Mammary epithelial cell (primary cell): ENCODE measurements at regions of chr10 and their contacts with region 1.

Region 1: GRCh38 chr10:5565671-5566577 is 41.2 kb downstream of the CALML3 start:
- DNase-seq: peak; percentile 100
- H3K4me3 ChIP-seq: no peak overlapping the region
- H3K27ac ChIP-seq: peak overlapping the region; percentile 100
- H3K4me1 ChIP-seq: peaks cover 44% of the 10 kb centered on the region
- H3K27me3 ChIP-seq: no peaks in the 10 kb centered on the region
- CTCF ChIP-seq: no peak

Region 2: DNA sequence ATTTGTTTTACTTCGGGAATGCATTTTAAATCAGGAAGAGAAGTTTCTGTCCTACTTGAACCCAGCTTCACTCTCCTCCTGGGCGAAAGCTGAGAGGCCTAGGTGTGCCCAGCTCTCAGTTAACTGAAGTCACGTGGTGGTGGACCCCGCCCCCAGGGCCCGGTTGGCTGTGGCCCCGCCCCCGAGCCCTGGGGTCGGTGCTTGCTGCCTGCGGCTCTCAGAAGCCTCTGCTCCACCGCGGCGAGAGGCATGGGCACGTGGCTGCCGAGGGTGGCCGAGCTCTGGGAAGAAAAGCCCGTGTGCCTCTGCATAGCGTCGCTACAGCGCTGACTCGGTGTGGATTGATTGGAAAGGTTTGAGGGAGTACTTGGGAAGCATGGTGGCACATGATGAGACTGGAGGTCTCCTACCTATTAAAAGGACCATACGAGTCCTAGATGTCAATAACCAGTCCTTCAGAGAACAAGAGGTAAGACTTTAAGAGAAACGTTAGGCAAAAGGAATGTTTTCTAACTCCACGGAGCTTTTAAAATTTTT is 119.5 kb before region 1 on chr10:
- CTCF ChIA-PET with region 1: interaction called, 3 read pairs
- dilution Hi-C with region 1: no loop called
- in situ Hi-C with region 1: no loop called
- intact Hi-C with region 1: loop called (anchors 5 kb)
- DNase-seq: peak; percentile 95
- H3K4me3 ChIP-seq: no peak overlapping the region
- H3K27ac ChIP-seq: no peak overlapping the region
- H3K4me1 ChIP-seq: peaks cover 27% of the 10 kb centered on the region
- H3K27me3 ChIP-seq: no peaks in the 10 kb centered on the region
- CTCF ChIP-seq: no peak

Region 3: DNA sequence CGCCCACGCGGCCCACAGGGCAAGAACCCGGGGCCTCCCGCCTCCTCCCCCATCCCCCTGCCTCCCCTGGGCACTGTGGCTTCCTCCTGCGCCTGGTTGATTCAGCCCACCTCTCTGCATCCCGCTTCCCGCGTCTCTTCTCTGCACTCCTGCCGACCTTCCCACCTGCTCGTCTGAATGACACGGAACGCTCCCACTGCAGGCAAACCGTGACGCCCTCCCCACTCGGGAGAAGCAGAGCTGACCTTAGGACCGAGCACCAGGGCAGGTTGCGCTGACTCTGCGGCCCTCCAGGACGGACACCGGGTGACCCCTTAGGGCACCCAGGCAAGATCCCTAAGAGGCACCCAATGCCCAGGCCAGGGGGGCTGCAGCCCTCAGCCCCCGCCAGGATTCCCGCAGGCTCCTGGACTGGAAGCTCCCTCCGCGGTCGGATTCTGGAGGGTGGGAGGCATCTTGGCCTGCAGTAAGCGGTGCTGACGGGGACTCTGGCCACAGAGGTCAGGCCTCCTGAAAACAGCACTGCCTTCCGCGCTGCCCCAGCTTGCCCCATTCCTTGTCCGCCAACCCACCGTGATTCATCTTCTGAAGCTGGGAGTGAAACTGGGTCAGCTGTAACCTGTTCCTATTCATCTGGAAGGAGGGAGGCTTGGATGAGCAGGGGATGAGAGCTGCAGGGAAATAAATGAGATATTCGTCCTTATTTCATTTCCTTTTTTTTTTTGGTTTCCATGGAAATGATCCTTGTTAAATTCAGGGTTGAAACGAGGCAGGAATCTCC is 40.2 kb before region 1 on chr10:
- CTCF ChIA-PET with region 1: no interaction called
- dilution Hi-C with region 1: no loop called
- in situ Hi-C with region 1: no loop called
- intact Hi-C with region 1: loop called (anchors 1 kb)
- DNase-seq: peak; percentile 90
- H3K4me3 ChIP-seq: peak overlapping the region; percentile 6 to 46 (median 43)
- H3K27ac ChIP-seq: peak overlapping the region; percentile 69
- H3K4me1 ChIP-seq: peaks cover 29% of the 10 kb centered on the region
- H3K27me3 ChIP-seq: no peaks in the 10 kb centered on the region
- CTCF ChIP-seq: no peak

Region 4: DNA sequence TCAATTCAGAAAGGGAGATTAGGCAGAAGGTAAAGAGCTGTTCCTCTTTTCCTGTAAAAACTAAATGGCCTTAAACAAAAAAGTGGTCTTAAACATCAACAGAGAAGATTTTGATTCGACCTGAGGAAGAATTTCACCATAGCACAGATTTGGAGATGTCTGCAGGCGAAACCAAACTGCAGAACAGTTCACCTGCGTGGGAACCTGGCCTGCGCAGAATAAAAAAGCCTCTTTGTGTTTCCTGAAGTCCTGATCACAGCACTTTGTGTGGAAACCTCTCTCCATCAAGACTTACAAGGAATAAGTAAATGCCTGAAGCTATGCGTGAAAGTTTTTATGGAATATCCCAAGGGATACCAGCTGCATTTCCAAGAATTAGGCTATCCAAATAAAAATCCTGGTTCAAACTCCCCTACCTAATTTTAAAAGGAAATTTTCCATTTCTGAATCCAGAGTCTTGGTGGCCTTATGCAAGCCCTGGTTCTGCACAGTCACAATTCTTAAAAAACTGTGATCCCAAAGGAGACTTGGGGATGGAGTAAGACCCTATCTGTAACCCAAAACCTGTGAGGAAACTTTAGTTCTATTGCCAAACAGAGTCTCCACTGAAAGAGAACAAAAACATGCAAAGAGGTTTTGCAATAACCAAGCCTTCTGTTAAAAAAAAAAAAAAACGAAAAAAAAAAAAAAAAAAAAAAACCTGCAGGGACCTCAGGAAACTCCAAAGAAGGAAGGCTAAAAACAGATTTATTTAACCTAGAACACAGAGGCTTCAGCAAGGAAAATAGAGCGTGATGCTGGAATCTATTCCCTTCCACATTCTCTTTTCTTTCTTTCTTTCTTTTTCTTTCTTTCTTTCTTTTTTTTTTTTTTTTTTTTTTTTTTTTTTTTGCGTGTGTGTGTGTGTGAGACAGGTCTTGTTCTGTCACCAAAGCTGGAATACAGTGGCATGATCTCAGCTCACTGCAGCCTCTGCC is 30.8 kb before region 1 on chr10:
- CTCF ChIA-PET with region 1: no interaction called
- dilution Hi-C with region 1: no loop called
- in situ Hi-C with region 1: no loop called
- intact Hi-C with region 1: loop called (anchors 1 kb)
- DNase-seq: peak; percentile 63
- H3K4me3 ChIP-seq: no peak overlapping the region
- H3K27ac ChIP-seq: peak overlapping the region; percentile 93
- H3K4me1 ChIP-seq: peaks cover 44% of the 10 kb centered on the region
- H3K27me3 ChIP-seq: no peaks in the 10 kb centered on the region
- CTCF ChIP-seq: no peak

Region 5: DNA sequence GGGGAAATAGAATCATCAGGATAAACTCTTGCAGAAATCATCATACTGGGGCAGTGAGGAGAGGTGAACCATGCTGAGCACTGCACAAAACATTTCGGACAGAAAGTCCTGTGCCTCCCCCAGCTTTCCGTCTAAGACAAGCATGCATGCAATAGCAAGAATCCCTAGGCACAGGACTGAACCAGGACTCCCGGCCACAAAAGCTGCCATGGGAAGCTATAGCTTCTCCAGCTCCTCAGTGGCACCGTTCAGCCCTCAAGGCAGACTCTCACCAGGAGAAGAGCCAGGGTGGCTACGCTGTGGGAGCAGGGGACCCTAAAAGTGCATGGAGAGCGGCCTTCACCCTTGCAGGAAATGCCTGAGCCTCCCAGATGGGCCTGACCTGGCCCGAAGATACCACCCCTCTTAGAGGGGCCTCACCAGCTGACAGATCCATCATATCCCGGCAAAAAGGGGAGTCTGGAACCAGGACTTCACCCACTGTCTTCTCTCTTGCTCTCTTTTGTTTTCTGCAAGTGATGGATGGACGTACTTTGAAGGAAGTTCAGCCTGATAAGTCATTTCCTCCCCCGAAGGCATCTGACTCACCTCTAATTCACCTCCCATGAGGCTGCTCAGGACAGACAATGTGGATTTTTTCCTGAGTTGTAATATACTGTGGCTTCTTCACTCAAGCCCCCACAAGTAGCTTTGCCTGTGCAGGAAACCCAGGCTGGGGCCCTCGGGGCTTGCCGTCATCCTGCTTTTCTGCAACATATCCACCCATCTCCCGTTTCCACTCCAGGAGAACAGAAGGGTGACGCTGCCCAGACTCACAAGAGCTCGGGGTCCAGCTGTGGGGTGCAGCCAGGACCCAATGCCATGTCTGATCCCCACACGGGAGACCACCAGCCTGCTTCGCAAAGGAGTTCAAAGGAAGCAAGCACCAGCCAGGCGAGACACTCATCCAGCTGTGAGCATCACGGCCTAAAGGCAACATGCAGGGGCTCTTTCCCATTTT is 30.0 kb after region 1 on chr10:
- CTCF ChIA-PET with region 1: no interaction called
- dilution Hi-C with region 1: no loop called
- in situ Hi-C with region 1: no loop called
- intact Hi-C with region 1: loop called (anchors 1 kb)
- DNase-seq: peak; percentile 99
- H3K4me3 ChIP-seq: peak overlapping the region; percentile 12 to 36 (median 30)
- H3K27ac ChIP-seq: peak overlapping the region; percentile 90
- H3K4me1 ChIP-seq: peaks cover 31% of the 10 kb centered on the region
- H3K27me3 ChIP-seq: no peaks in the 10 kb centered on the region
- CTCF ChIP-seq: no peak

Region 6: GRCh38 chr10:5614155-5614721 is 48.3 kb after region 1 on chr10:
- CTCF ChIA-PET with region 1: interaction called, 3 read pairs
- dilution Hi-C with region 1: no loop called
- in situ Hi-C with region 1: no loop called
- intact Hi-C with region 1: loop called (anchors 1 kb)
- DNase-seq: no peak
- H3K4me3 ChIP-seq: no peak overlapping the region
- H3K27ac ChIP-seq: peak overlapping the region; percentile 46
- H3K4me1 ChIP-seq: peaks cover 71% of the 10 kb centered on the region
- H3K27me3 ChIP-seq: no peaks in the 10 kb centered on the region
- CTCF ChIP-seq: no peak

Region 7: GRCh38 chr10:5645375-5645774 is 79.5 kb after region 1 on chr10:
- CTCF ChIA-PET with region 1: no interaction called
- dilution Hi-C with region 1: no loop called
- in situ Hi-C with region 1: no loop called
- intact Hi-C with region 1: no loop called
- DNase-seq: no peak
- H3K4me3 ChIP-seq: no peak overlapping the region
- H3K27ac ChIP-seq: no peak overlapping the region
- H3K4me1 ChIP-seq: no peaks in the 10 kb centered on the region
- H3K27me3 ChIP-seq: no peaks in the 10 kb centered on the region
- CTCF ChIP-seq: no peak